ENCODE measurements at regions of chr11 and their contacts with region 1.

Region 1: GRCh38 chr11:74321487-74322188 is 10.2 kb upstream of the P4HA3 start:
- DNase-seq: no peak
- H3K4me3 ChIP-seq: no peak overlapping the region
- H3K27ac ChIP-seq: peak overlapping the region; percentile 5 to 62 (median 36)
- H3K4me1 ChIP-seq: peaks cover 0 to 55% (median 47%) of the 10 kb centered on the region in 4 donors
- H3K27me3 ChIP-seq: no peaks in the 10 kb centered on the region
- CTCF ChIP-seq: peak in 2 of 4 experiments; percentile 10 to 43
- EP300 ChIP-seq: no peak
- POLR2A ChIP-seq: no peak

Region 2: GRCh38 chr11:74255741-74256369 is 65.8 kb before region 1 on chr11:
- intact Hi-C with region 1: loop called (anchors 1 kb)
- DNase-seq: no peak
- H3K4me3 ChIP-seq: no peak overlapping the region
- H3K27ac ChIP-seq: no peak overlapping the region
- H3K4me1 ChIP-seq: peaks cover 0 to 19% (median 18%) of the 10 kb centered on the region in 4 donors
- H3K27me3 ChIP-seq: no peaks in the 10 kb centered on the region
- CTCF ChIP-seq: peak; percentile 62 to 90 (median 86)
- EP300 ChIP-seq: no peak
- POLR2A ChIP-seq: no peak

Measured in sigmoid colon (tissue), 7 donors.